Activated naive CD4-positive, alpha-beta T cell treated with anti-CD3 and anti-CD28 coated beads for 36 hours (primary cell): ENCODE measurements at regions of chr12 and their contacts with region 1.

Region 1: DNA sequence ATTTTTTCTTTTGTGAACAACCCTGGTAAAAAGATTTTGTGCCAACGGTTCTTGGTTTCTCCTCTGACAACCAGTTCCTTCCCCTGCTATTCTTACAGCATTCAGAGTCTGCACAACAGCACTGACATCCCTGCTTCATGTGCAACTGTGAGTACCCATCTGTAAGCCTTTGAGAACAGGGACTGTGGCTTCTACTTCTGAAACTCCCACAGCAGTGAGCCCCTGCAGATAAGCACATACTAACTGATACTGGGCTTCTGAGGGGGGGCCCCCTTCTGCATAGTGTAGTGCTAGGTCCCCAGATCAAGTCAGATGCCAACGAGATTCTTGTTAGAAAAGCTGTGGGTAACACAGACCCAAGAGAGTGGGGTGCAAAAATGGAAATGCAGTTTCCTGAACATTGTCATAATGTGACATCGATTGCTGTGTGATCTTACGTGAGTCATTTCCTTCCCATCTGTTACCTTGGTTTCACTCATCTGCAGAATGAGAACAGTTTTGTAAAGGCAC is 11.1 kb upstream of the NINJ2 start:
- DNase-seq: peak; percentile 91
- H3K4me3 Mint-ChIP-seq: peak overlapping the region; percentile 16
- H3K27ac Mint-ChIP-seq: peak overlapping the region; percentile 78
- H3K4me1 Mint-ChIP-seq: peaks cover 65% of the 10 kb centered on the region
- H3K27me3 Mint-ChIP-seq: no peaks in the 10 kb centered on the region

Region 2: GRCh38 chr12:99605-100004 is 574.7 kb before region 1 on chr12:
- CTCF ChIA-PET with region 1: no interaction called
- intact Hi-C with region 1: no loop called
- DNase-seq: no peak
- H3K4me3 Mint-ChIP-seq: no peak overlapping the region
- H3K27ac Mint-ChIP-seq: no peak overlapping the region
- H3K4me1 Mint-ChIP-seq: peaks cover 5% of the 10 kb centered on the region
- H3K27me3 Mint-ChIP-seq: peaks cover 10% of the 10 kb centered on the region

Region 3: GRCh38 chr12:642633-643474 is 31.5 kb before region 1 on chr12:
- CTCF ChIA-PET with region 1: no interaction called
- intact Hi-C with region 1: loop called (anchors 1 kb)
- DNase-seq: peak; percentile 81
- H3K4me3 Mint-ChIP-seq: peak overlapping the region; percentile 74
- H3K27ac Mint-ChIP-seq: peak overlapping the region; percentile 81
- H3K4me1 Mint-ChIP-seq: peaks cover 58% of the 10 kb centered on the region
- H3K27me3 Mint-ChIP-seq: no peaks in the 10 kb centered on the region

Region 4: GRCh38 chr12:700061-700460 is 25.7 kb after region 1 on chr12:
- CTCF ChIA-PET with region 1: no interaction called
- intact Hi-C with region 1: no loop called
- DNase-seq: no peak
- H3K4me3 Mint-ChIP-seq: no peak overlapping the region
- H3K27ac Mint-ChIP-seq: no peak overlapping the region
- H3K4me1 Mint-ChIP-seq: peaks cover 29% of the 10 kb centered on the region
- H3K27me3 Mint-ChIP-seq: no peaks in the 10 kb centered on the region

Region 5: GRCh38 chr12:716506-716905 is 42.2 kb after region 1 on chr12:
- CTCF ChIA-PET with region 1: interaction called, 9 read pairs
- intact Hi-C with region 1: loop called (anchors 1 kb)
- DNase-seq: peak; percentile 80
- H3K4me3 Mint-ChIP-seq: peak overlapping the region; percentile 0
- H3K27ac Mint-ChIP-seq: peak overlapping the region; percentile 75
- H3K4me1 Mint-ChIP-seq: peaks cover 65% of the 10 kb centered on the region
- H3K27me3 Mint-ChIP-seq: no peaks in the 10 kb centered on the region

Region 6: DNA sequence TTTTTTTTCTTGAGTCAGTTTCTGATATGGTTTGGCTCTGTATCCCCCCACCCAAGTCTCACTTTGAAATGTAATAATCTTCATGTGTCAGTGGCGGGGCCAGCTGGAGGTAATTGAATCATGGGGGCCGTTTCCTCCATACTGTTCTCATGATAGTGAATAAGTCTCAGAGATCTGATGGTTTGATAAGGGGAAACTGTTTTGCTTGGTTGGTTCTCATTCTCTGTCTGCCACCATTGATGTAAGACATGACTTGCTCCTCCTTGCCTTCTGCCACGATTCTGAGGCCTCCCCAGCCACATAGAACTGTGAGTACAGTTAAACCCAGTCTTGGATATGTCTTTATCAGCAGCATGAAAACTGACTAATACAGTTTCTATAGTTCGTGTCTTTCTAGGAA is 121.0 kb after region 1 on chr12:
- CTCF ChIA-PET with region 1: no interaction called
- intact Hi-C with region 1: loop called (anchors 1 kb)
- DNase-seq: peak; percentile 83
- H3K4me3 Mint-ChIP-seq: peak overlapping the region; percentile 31
- H3K27ac Mint-ChIP-seq: peak overlapping the region; percentile 88
- H3K4me1 Mint-ChIP-seq: peaks cover 77% of the 10 kb centered on the region
- H3K27me3 Mint-ChIP-seq: no peaks in the 10 kb centered on the region